ENCODE measurements at regions of chrX and their contacts with region 1.

Region 1: GRCh38 chrX:13759152-13759718 is 24.7 kb downstream of the OFD1 start:
- DNase-seq: no peak
- ATAC-seq: peak; percentile 78
- H3K4me3 Mint-ChIP-seq: peak overlapping the region; percentile 32
- H3K27ac Mint-ChIP-seq: peak overlapping the region; percentile 83
- H3K4me1 Mint-ChIP-seq: peaks cover 57% of the 10 kb centered on the region
- H3K27me3 Mint-ChIP-seq: no peaks in the 10 kb centered on the region
- CTCF ChIP-seq: no peak

Region 2: GRCh38 chrX:13235930-13236329 is 523.3 kb before region 1 on chrX:
- CTCF ChIA-PET with region 1: no interaction called
- POLR2A ChIA-PET with region 1: no interaction called
- intact Hi-C with region 1: no loop called
- DNase-seq: no peak
- ATAC-seq: no peak
- H3K4me3 Mint-ChIP-seq: no peak overlapping the region
- H3K27ac Mint-ChIP-seq: no peak overlapping the region
- H3K4me1 Mint-ChIP-seq: peaks cover 19% of the 10 kb centered on the region
- H3K27me3 Mint-ChIP-seq: no peaks in the 10 kb centered on the region
- CTCF ChIP-seq: no peak

Region 3: DNA sequence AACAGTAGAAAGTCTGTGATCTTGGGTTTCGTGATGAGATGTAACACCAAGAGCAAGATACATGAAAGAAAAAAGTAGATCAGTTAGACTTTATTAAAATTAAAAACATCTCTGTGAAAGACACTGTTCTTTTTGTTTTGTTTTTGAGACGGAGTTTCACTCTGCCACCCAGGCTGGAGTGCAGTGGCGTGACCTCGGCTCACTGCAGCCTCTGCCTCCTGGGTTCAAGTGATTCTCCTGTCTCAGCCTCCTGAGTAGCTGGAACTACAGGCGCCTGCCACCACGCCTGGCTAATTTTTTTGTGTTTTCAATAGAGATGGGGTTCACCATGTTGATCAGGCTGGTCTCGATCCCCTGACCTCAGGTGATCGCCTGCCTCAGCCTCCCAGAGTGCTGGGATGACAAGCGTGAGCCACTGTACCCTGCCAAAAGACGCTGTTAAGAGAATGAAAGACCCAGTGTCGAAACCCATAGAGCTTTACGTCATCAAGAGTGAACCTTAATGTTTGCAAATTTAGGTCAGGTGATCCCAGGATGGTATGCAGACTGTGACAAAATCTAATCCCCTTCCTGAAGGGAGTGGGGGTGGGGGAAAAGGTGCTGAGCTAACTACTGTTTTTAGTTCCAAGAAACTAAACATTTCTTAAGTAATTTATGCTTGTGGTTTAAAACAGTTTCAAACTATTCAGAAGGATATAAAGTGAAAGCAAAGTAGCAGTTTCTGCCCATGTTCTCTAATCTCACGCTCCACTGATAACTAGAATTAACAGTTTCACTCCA is 16.6 kb before region 1 on chrX:
- CTCF ChIA-PET with region 1: no interaction called
- POLR2A ChIA-PET with region 1: interaction called, 7 read pairs
- intact Hi-C with region 1: loop called (anchors 2 kb)
- DNase-seq: peak; percentile 16
- ATAC-seq: peak; percentile 85
- H3K4me3 Mint-ChIP-seq: peak overlapping the region; percentile 82
- H3K27ac Mint-ChIP-seq: peak overlapping the region; percentile 94
- H3K4me1 Mint-ChIP-seq: peaks cover 38% of the 10 kb centered on the region
- H3K27me3 Mint-ChIP-seq: no peaks in the 10 kb centered on the region
- CTCF ChIP-seq: no peak

Measured in activated B cell treated with CpG ODN at 0.5 μM for 24 hours (primary cell).